ENCODE measurements at regions of chr20 and their contacts with region 1.

Region 1: DNA sequence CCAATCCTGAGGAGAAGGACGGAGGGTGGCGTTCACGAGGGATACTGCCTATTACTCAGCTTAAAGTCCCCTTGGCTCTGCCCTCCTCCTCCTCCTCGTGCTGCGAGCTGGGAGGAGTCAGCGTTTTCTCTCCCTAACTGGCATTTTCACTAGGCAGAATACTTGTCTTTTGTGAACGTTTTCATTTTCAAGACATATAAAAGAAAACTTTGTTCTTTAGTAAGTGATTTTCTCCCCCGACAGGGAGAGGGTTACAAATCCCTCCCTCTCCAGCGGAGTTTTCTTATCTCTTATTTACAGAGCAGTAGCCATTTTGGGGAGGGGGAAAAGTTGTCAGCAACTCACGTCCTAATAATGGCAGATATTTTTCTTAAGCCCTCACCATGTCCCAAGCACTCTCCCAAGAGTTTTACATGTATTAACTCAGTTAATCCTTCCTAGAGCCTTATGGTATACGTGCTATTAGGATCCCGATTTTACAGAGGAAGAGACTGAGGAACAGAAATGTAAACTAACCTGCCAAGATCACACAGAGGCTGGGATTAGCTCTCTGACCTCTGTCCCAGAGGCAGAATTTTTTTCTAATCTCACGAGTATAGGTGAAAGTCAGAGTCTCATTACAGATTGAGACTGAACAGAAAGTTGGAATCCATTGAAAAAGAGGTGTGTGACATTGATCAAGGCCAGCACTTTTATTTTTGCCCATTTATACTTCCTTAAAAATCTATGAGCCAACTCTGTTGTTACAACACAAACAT is 30.0 kb upstream of the ZNF217 start:
- DNase-seq: peak; percentile 52
- ATAC-seq: peak; percentile 66
- H3K4me3 ChIP-seq: peak overlapping the region; percentile 32 to 58 (median 47)
- H3K4me3 Mint-ChIP-seq: peak overlapping the region; percentile 91
- H3K27ac ChIP-seq: peak overlapping the region; percentile 50 to 77
- H3K27ac Mint-ChIP-seq: peak overlapping the region; percentile 94
- H3K4me1 ChIP-seq: peaks cover 40 to 53% of the 10 kb centered on the region in 2 donors
- H3K4me1 Mint-ChIP-seq: peaks cover 47% of the 10 kb centered on the region
- H3K27me3 ChIP-seq: no peaks in the 10 kb centered on the region
- H3K27me3 Mint-ChIP-seq: no peaks in the 10 kb centered on the region
- CTCF ChIP-seq: no peak

Region 2: GRCh38 chr20:53176134-53176533 is 447.5 kb before region 1 on chr20:
- CTCF ChIA-PET with region 1: no interaction called
- POLR2A ChIA-PET with region 1: no interaction called
- intact Hi-C with region 1: no loop called
- DNase-seq: no peak
- ATAC-seq: no peak
- H3K4me3 ChIP-seq: no peak overlapping the region
- H3K4me3 Mint-ChIP-seq: no peak overlapping the region
- H3K27ac ChIP-seq: no peak overlapping the region
- H3K27ac Mint-ChIP-seq: no peak overlapping the region
- H3K4me1 ChIP-seq: no peaks in the 10 kb centered on the region
- H3K4me1 Mint-ChIP-seq: no peaks in the 10 kb centered on the region
- H3K27me3 ChIP-seq: no peaks in the 10 kb centered on the region
- H3K27me3 Mint-ChIP-seq: peaks cover 12% of the 10 kb centered on the region
- CTCF ChIP-seq: no peak

Region 3: GRCh38 chr20:53586640-53587039 is 37.0 kb before region 1 on chr20:
- CTCF ChIA-PET with region 1: interaction called, 4 read pairs
- POLR2A ChIA-PET with region 1: no interaction called
- intact Hi-C with region 1: loop called (anchors 5 kb)
- DNase-seq: no peak
- ATAC-seq: no peak
- H3K4me3 ChIP-seq: peak overlapping the region in 1 of 5 experiments; percentile 2
- H3K4me3 Mint-ChIP-seq: peak overlapping the region; percentile 81
- H3K27ac ChIP-seq: peak overlapping the region; percentile 41 to 82
- H3K27ac Mint-ChIP-seq: peak overlapping the region; percentile 93
- H3K4me1 ChIP-seq: peaks cover 66 to 68% of the 10 kb centered on the region in 2 donors
- H3K4me1 Mint-ChIP-seq: peaks cover 80% of the 10 kb centered on the region
- H3K27me3 ChIP-seq: no peaks in the 10 kb centered on the region
- H3K27me3 Mint-ChIP-seq: no peaks in the 10 kb centered on the region
- CTCF ChIP-seq: no peak

Region 4: DNA sequence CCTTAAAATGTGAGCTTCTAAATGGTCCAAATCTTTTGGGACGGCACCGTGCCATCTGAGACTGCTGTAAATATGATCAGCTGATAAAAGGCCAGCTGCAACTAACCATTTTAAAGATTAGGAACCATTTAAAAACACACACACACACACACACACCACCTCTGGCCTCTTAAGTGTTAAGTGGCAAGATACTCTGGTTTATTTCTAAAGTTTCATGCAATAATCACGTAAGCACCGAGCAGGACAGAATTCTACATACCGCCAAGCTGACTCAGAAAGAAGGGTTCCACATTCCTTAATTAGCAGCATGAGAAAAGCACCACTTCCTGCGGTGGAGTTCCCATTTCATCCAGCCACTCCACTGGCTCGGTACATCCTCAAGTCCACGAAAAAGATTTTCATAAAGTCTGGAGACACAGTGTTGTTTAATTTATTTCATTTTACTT is 12.2 kb before region 1 on chr20:
- CTCF ChIA-PET with region 1: interaction called, 9 read pairs
- POLR2A ChIA-PET with region 1: interaction called, 11 read pairs
- intact Hi-C with region 1: no loop called
- DNase-seq: no peak
- ATAC-seq: no peak
- H3K4me3 ChIP-seq: no peak overlapping the region
- H3K4me3 Mint-ChIP-seq: peak overlapping the region; percentile 27
- H3K27ac ChIP-seq: no peak overlapping the region
- H3K27ac Mint-ChIP-seq: peak overlapping the region; percentile 62
- H3K4me1 ChIP-seq: peaks cover 28% of the 10 kb centered on the region in 2 donors
- H3K4me1 Mint-ChIP-seq: peaks cover 34% of the 10 kb centered on the region
- H3K27me3 ChIP-seq: no peaks in the 10 kb centered on the region
- H3K27me3 Mint-ChIP-seq: no peaks in the 10 kb centered on the region
- CTCF ChIP-seq: no peak

Region 5: GRCh38 chr20:53643031-53643832 is 19.6 kb after region 1 on chr20:
- CTCF ChIA-PET with region 1: interaction called, 10 read pairs
- POLR2A ChIA-PET with region 1: interaction called, 3 read pairs
- intact Hi-C with region 1: loop called (anchors 2 kb)
- DNase-seq: peak; percentile 74
- ATAC-seq: peak; percentile 90
- H3K4me3 ChIP-seq: peak overlapping the region in 4 of 5 experiments; percentile 0 to 43 (median 24)
- H3K4me3 Mint-ChIP-seq: peak overlapping the region; percentile 82
- H3K27ac ChIP-seq: peak overlapping the region; percentile 64 to 85
- H3K27ac Mint-ChIP-seq: peak overlapping the region; percentile 95
- H3K4me1 ChIP-seq: peaks cover 23 to 26% of the 10 kb centered on the region in 2 donors
- H3K4me1 Mint-ChIP-seq: peaks cover 31% of the 10 kb centered on the region
- H3K27me3 ChIP-seq: no peaks in the 10 kb centered on the region
- H3K27me3 Mint-ChIP-seq: no peaks in the 10 kb centered on the region
- CTCF ChIP-seq: no peak

Region 6: GRCh38 chr20:53819973-53820451 is 196.4 kb after region 1 on chr20:
- CTCF ChIA-PET with region 1: no interaction called
- POLR2A ChIA-PET with region 1: no interaction called
- intact Hi-C with region 1: no loop called
- DNase-seq: no peak
- ATAC-seq: no peak
- H3K4me3 ChIP-seq: no peak overlapping the region
- H3K4me3 Mint-ChIP-seq: no peak overlapping the region
- H3K27ac ChIP-seq: no peak overlapping the region
- H3K27ac Mint-ChIP-seq: no peak overlapping the region
- H3K4me1 ChIP-seq: no peaks in the 10 kb centered on the region
- H3K4me1 Mint-ChIP-seq: peaks cover under 1% of the 10 kb centered on the region
- H3K27me3 ChIP-seq: no peaks in the 10 kb centered on the region
- H3K27me3 Mint-ChIP-seq: no peaks in the 10 kb centered on the region
- CTCF ChIP-seq: no peak